CD4-positive, alpha-beta memory T cell (primary cell): ENCODE measurements at regions of chr3 and their contacts with region 1.

Region 1: DNA sequence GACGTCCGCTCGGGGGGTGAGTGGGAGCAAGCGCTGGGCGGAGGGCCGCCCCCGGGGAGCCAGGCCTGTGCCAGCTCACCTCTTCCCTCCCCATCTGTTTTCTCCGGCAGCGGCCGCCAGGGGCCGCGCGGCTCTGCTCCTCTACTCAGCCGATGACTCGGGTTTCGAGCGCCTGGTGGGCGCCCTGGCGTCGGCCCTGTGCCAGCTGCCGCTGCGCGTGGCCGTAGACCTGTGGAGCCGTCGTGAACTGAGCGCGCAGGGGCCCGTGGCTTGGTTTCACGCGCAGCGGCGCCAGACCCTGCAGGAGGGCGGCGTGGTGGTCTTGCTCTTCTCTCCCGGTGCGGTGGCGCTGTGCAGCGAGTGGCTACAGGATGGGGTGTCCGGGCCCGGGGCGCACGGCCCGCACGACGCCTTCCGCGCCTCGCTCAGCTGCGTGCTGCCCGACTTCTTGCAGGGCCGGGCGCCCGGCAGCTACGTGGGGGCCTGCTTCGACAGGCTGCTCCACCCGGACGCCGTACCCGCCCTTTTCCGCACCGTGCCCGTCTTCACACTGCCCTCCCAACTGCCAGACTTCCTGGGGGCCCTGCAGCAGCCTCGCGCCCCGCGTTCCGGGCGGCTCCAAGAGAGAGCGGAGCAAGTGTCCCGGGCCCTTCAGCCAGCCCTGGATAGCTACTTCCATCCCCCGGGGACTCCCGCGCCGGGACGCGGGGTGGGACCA is 632 bp upstream of the CRELD1 start:
- DNase-seq: peak; percentile 83 to 90 (median 85)
- H3K4me3 ChIP-seq: peak overlapping the region; percentile 13 to 87
- H3K4me3 Mint-ChIP-seq: peak overlapping the region; percentile 95 to 98 (median 97)
- H3K27ac ChIP-seq: peak overlapping the region; percentile 89
- H3K27ac Mint-ChIP-seq: peak overlapping the region; percentile 94 to 100 (median 99)
- H3K4me1 ChIP-seq: peaks cover 34% of the 10 kb centered on the region
- H3K4me1 Mint-ChIP-seq: peaks cover 18 to 55% (median 39%) of the 10 kb centered on the region in 4 donors
- H3K27me3 ChIP-seq: no peaks in the 10 kb centered on the region
- H3K27me3 Mint-ChIP-seq: no peaks in the 10 kb centered on the region

Region 2: DNA sequence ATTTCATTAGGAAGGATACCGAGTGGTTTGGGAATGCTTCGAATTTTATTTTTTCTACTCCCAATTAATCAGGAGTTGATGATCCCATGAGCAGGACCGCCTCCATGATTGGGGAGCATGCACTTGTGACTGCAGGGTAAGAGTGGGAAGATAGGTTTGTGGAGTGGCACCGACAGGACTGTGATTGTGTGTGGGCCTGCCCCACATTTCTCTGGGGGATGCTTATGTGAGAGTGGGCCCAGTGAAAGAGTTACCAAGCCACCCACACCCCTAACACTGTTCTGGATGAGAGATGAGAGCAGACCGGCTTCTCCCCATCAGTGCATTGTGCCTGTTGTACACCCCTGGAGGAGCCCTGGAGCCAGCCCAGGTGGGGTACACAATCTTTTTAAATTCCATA is 456.1 kb before region 1 on chr3:
- CTCF ChIA-PET with region 1: no interaction called
- POLR2A ChIA-PET with region 1: no interaction called
- intact Hi-C with region 1: no loop called
- DNase-seq: no peak
- H3K4me3 ChIP-seq: no peak overlapping the region
- H3K4me3 Mint-ChIP-seq: no peak overlapping the region
- H3K27ac ChIP-seq: no peak overlapping the region
- H3K27ac Mint-ChIP-seq: no peak overlapping the region
- H3K4me1 ChIP-seq: no peaks in the 10 kb centered on the region
- H3K4me1 Mint-ChIP-seq: peaks cover 0 to 2% (median 0%) of the 10 kb centered on the region in 4 donors
- H3K27me3 ChIP-seq: no peaks in the 10 kb centered on the region
- H3K27me3 Mint-ChIP-seq: no peaks in the 10 kb centered on the region

Region 3: GRCh38 chr3:9731206-9732079 is 201.6 kb before region 1 on chr3 and contains the start of gene BRPF1:
- CTCF ChIA-PET with region 1: interaction called, 3 read pairs
- POLR2A ChIA-PET with region 1: interaction called, 6 read pairs
- intact Hi-C with region 1: loop called (anchors 2 kb)
- DNase-seq: peak; percentile 98 to 100 (median 98)
- H3K4me3 ChIP-seq: peak within 1 kb of the TSS; percentile 48 to 96
- H3K4me3 Mint-ChIP-seq: peak within 1 kb of the TSS; percentile 89 to 98 (median 93)
- H3K27ac ChIP-seq: peak within 1 kb of the TSS; percentile 77
- H3K27ac Mint-ChIP-seq: peak within 1 kb of the TSS; percentile 93 to 98 (median 95)
- H3K4me1 ChIP-seq: peaks cover 64% of the 10 kb centered on the region
- H3K4me1 Mint-ChIP-seq: peaks cover 47 to 75% (median 59%) of the 10 kb centered on the region in 4 donors
- H3K27me3 ChIP-seq: no peaks in the 10 kb centered on the region
- H3K27me3 Mint-ChIP-seq: no peaks in the 10 kb centered on the region
- total RNA-seq, gene BRPF1: 40.4 to 40.5 TPM

Region 4: DNA sequence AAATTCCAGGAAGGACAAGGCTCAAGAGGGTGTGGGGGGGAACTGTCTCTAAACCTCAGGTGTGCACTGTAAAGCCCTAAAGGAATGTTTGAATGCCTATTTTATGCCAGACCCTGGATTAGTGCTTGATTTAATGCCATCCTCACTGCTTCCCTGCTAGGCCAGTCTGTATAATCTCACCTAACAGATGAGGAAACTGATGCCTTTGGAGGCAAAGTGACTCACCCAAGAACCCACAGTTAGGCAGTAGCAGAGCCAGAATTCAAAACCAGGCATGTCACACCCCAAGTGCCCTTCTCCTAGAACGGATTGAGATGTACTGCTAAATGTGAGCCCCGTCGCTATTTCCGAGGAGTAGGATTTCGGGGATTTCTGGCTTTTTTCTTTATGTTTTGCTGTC is 171.1 kb before region 1 on chr3:
- CTCF ChIA-PET with region 1: no interaction called
- POLR2A ChIA-PET with region 1: no interaction called
- intact Hi-C with region 1: no loop called
- DNase-seq: no peak
- H3K4me3 ChIP-seq: no peak overlapping the region
- H3K4me3 Mint-ChIP-seq: no peak overlapping the region
- H3K27ac ChIP-seq: no peak overlapping the region
- H3K27ac Mint-ChIP-seq: no peak overlapping the region
- H3K4me1 ChIP-seq: no peaks in the 10 kb centered on the region
- H3K4me1 Mint-ChIP-seq: peaks cover 2 to 7% (median 4%) of the 10 kb centered on the region in 4 donors
- H3K27me3 ChIP-seq: no peaks in the 10 kb centered on the region
- H3K27me3 Mint-ChIP-seq: no peaks in the 10 kb centered on the region

Region 5: GRCh38 chr3:9843715-9844438 is 89.1 kb before region 1 on chr3 and contains the start of gene RPUSD3:
- CTCF ChIA-PET with region 1: interaction called, 8 read pairs
- POLR2A ChIA-PET with region 1: interaction called, 17 read pairs
- intact Hi-C with region 1: loop called (anchors 5 kb)
- DNase-seq: peak; percentile 92 to 98 (median 93)
- H3K4me3 ChIP-seq: peak within 1 kb of the TSS; percentile 80 to 92
- H3K4me3 Mint-ChIP-seq: peak within 1 kb of the TSS; percentile 96 to 99 (median 97)
- H3K27ac ChIP-seq: peak within 1 kb of the TSS; percentile 65
- H3K27ac Mint-ChIP-seq: peak within 1 kb of the TSS; percentile 87 to 97 (median 92)
- H3K4me1 ChIP-seq: peaks cover 23% of the 10 kb centered on the region
- H3K4me1 Mint-ChIP-seq: peaks cover 10 to 36% (median 21%) of the 10 kb centered on the region in 4 donors
- H3K27me3 ChIP-seq: no peaks in the 10 kb centered on the region
- H3K27me3 Mint-ChIP-seq: no peaks in the 10 kb centered on the region
- total RNA-seq, gene RPUSD3: 63.3 to 67.6 TPM

Region 6: DNA sequence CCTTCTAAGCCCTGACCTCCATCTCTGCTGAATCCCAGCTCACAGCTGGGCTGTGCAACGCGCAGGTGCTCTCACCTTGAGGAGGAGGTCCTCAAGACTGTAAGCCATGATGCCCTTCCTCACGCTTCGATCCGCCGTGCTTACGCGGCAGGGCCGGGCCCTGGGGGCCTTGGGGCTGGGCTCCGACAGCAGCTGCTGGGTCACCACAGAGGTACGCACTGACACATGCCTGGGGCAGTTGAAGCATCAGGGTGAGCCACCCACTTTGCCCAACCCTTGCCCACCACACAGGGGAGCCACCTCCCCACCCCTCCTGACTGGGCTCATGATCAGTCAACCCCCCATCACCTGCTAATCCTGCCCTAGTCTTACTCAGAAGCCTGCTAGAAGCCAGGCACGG is 56.0 kb before region 1 on chr3:
- CTCF ChIA-PET with region 1: no interaction called
- POLR2A ChIA-PET with region 1: no interaction called
- intact Hi-C with region 1: no loop called
- DNase-seq: no peak
- H3K4me3 ChIP-seq: no peak overlapping the region
- H3K4me3 Mint-ChIP-seq: no peak overlapping the region
- H3K27ac ChIP-seq: no peak overlapping the region
- H3K27ac Mint-ChIP-seq: no peak overlapping the region
- H3K4me1 ChIP-seq: no peaks in the 10 kb centered on the region
- H3K4me1 Mint-ChIP-seq: peaks cover 0 to 2% (median 0%) of the 10 kb centered on the region in 4 donors
- H3K27me3 ChIP-seq: no peaks in the 10 kb centered on the region
- H3K27me3 Mint-ChIP-seq: no peaks in the 10 kb centered on the region

Region 7: GRCh38 chr3:9946112-9947024 is 13.4 kb after region 1 on chr3:
- CTCF ChIA-PET with region 1: interaction called, 48 read pairs
- POLR2A ChIA-PET with region 1: interaction called, 225 read pairs
- intact Hi-C with region 1: loop called (anchors 1 kb)
- DNase-seq: peak; percentile 80 to 88 (median 84)
- H3K4me3 ChIP-seq: peak overlapping the region in 1 of 2 donors; percentile 45
- H3K4me3 Mint-ChIP-seq: peak overlapping the region; percentile 40 to 83 (median 79)
- H3K27ac ChIP-seq: peak overlapping the region; percentile 70
- H3K27ac Mint-ChIP-seq: peak overlapping the region; percentile 59 to 94 (median 88)
- H3K4me1 ChIP-seq: peaks cover 6% of the 10 kb centered on the region
- H3K4me1 Mint-ChIP-seq: peaks cover 4 to 23% (median 6%) of the 10 kb centered on the region in 4 donors
- H3K27me3 ChIP-seq: no peaks in the 10 kb centered on the region
- H3K27me3 Mint-ChIP-seq: no peaks in the 10 kb centered on the region

Region 8: GRCh38 chr3:10026084-10026890 is 93.3 kb after region 1 on chr3 and contains the start of gene FANCD2:
- CTCF ChIA-PET with region 1: no interaction called
- POLR2A ChIA-PET with region 1: interaction called, 20 read pairs
- intact Hi-C with region 1: loop called (anchors 1 kb)
- DNase-seq: peak; percentile 91 to 96 (median 91)
- H3K4me3 ChIP-seq: peak within 1 kb of the TSS; percentile 84 to 88
- H3K4me3 Mint-ChIP-seq: peak within 1 kb of the TSS; percentile 94 to 99 (median 96)
- H3K27ac ChIP-seq: peak within 1 kb of the TSS; percentile 87
- H3K27ac Mint-ChIP-seq: peak within 1 kb of the TSS; percentile 97 to 99 (median 98)
- H3K4me1 ChIP-seq: peaks cover 25% of the 10 kb centered on the region
- H3K4me1 Mint-ChIP-seq: peaks cover 9 to 43% (median 19%) of the 10 kb centered on the region in 4 donors
- H3K27me3 ChIP-seq: no peaks in the 10 kb centered on the region
- H3K27me3 Mint-ChIP-seq: no peaks in the 10 kb centered on the region
- total RNA-seq, gene FANCD2: 28.1 to 28.3 TPM

Region 9: GRCh38 chr3:10286596-10287330 is 353.8 kb after region 1 on chr3:
- CTCF ChIA-PET with region 1: interaction called, 3 read pairs
- POLR2A ChIA-PET with region 1: interaction called, 3 read pairs
- intact Hi-C with region 1: loop called (anchors 1 kb)
- DNase-seq: peak in 3 of 5 donors; percentile 66 to 72 (median 66)
- H3K4me3 ChIP-seq: no peak overlapping the region
- H3K4me3 Mint-ChIP-seq: no peak overlapping the region
- H3K27ac ChIP-seq: no peak overlapping the region
- H3K27ac Mint-ChIP-seq: peak overlapping the region; percentile 2 to 57 (median 43)
- H3K4me1 ChIP-seq: peaks cover 23% of the 10 kb centered on the region
- H3K4me1 Mint-ChIP-seq: peaks cover 26 to 45% (median 29%) of the 10 kb centered on the region in 4 donors
- H3K27me3 ChIP-seq: no peaks in the 10 kb centered on the region
- H3K27me3 Mint-ChIP-seq: no peaks in the 10 kb centered on the region